BJ (cell line): ENCODE measurements at regions of chr3 and their contacts with region 1.

Region 1: DNA sequence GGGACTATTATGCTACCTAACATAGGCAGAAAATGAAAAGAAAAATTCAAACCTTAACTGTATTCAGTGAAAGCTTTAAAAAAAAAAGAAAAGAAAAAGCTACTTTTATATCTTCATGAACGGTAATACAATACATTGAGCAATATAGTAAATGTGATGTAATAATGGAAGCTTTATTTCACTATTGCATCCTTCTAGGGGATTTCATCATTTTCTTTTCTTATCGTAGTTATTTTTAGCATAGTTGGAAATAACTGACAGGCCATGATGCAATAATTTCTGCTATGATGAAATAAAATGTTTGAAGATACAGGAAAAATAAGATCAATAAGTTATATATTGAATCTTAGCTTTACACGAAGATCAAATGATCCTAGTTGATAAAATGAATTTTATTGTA is 40.3 kb upstream of the ZCWPW2 start:
- DNase-seq: no peak
- H3K4me3 ChIP-seq: no peak overlapping the region
- H3K27me3 ChIP-seq: no peaks in the 10 kb centered on the region
- CTCF ChIP-seq: no peak

Region 2: DNA sequence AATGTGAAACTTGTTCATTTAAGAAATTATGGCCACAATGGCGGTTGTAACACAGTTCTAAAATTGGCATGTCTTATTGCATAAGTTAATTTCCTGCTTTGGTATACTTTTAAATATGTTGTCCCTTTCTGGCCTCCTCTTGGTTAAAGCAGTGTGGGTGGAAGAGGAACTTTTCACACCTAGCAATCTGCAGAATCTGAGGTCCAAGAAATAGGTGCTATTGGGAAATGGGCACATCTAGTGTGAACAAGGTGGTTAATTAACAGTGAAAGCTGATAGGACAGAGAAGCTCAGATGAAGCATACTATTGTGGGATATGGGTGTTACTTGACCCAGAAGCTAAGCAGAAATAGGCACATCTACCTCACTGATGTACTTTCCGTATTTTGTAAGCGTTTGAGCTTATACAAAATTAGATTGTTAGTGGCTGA is 56.2 kb before region 1 on chr3:
- CTCF ChIA-PET with region 1: no interaction called
- POLR2A ChIA-PET with region 1: interaction called, 10 read pairs
- DNase-seq: no peak
- H3K4me3 ChIP-seq: no peak overlapping the region
- H3K27me3 ChIP-seq: no peaks in the 10 kb centered on the region
- CTCF ChIP-seq: no peak

Region 3: GRCh38 chr3:28295898-28296490 is 12.2 kb before region 1 on chr3:
- CTCF ChIA-PET with region 1: no interaction called
- POLR2A ChIA-PET with region 1: no interaction called
- DNase-seq: no peak
- H3K4me3 ChIP-seq: no peak overlapping the region
- H3K27me3 ChIP-seq: no peaks in the 10 kb centered on the region
- CTCF ChIP-seq: no peak